Caco-2 (cell line): ENCODE measurements at regions of chr16 and their contacts with region 1.

Region 1: DNA sequence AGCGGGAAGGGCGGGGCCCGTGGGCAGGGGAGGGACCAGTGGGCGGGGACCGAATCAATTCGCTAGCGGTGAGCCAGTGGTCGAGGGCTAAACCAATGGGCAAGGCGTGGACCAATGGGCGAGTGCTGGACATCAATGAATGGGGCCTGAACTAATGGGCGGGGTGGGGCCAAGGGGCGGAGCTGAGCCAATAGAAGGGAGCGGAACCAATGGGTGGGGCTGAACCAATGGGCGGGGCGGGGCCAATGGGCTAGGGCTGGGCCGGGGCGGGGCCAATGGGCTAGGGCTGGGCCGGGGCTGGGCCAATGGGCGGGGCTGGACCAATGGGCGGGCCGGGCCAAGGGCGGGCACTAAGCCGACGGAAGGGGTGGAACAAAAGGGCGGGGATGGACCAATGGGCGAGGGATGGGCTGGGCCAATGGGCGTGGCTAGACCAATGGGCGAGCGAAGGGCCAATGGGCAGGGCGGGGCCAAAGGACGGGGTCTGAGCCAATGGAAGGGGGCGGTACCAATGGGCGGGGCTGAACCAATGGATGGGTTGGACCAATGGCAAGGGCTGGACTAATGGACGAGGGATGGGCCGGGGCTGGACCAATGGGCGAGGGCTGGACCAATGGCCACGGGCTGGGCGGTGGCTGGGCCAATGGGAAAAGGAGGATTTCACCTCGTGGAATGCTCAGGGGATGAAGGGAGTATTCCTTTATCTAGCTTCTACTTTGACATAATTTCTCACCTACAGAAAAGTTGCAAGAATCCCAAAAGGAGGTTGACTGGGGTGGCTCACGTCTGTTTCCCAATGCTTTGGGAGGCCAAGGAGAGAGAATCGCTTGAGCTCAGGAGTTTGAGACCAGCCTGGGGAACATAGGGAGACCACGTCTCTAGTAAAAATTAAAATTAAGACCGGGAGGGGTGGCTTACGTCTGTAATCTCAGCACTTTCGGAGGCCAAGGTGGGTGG is 6.0 kb upstream of the FLYWCH1 start:
- DNase-seq: peak; percentile 99 to 100
- H3K4me3 ChIP-seq: peak overlapping the region; percentile 88
- H3K4me3 Mint-ChIP-seq: peak overlapping the region; percentile 92
- H3K27ac Mint-ChIP-seq: peak overlapping the region; percentile 90
- H3K4me1 ChIP-seq: peaks cover 6% of the 10 kb centered on the region
- H3K4me1 Mint-ChIP-seq: peaks cover 5% of the 10 kb centered on the region
- H3K27me3 ChIP-seq: no peaks in the 10 kb centered on the region
- H3K27me3 Mint-ChIP-seq: no peaks in the 10 kb centered on the region
- CTCF ChIP-seq: no peak

Region 2: GRCh38 chr16:2715519-2715918 is 190.2 kb before region 1 on chr16:
- CTCF ChIA-PET with region 1: no interaction called
- POLR2A ChIA-PET with region 1: no interaction called
- intact Hi-C with region 1: no loop called
- DNase-seq: peak in 1 of 2 experiments; percentile 51
- H3K4me3 ChIP-seq: no peak overlapping the region
- H3K4me3 Mint-ChIP-seq: no peak overlapping the region
- H3K27ac Mint-ChIP-seq: no peak overlapping the region
- H3K4me1 ChIP-seq: peaks cover 20% of the 10 kb centered on the region
- H3K4me1 Mint-ChIP-seq: no peaks in the 10 kb centered on the region
- H3K27me3 ChIP-seq: no peaks in the 10 kb centered on the region
- H3K27me3 Mint-ChIP-seq: peaks cover 3% of the 10 kb centered on the region
- CTCF ChIP-seq: no peak

Region 3: DNA sequence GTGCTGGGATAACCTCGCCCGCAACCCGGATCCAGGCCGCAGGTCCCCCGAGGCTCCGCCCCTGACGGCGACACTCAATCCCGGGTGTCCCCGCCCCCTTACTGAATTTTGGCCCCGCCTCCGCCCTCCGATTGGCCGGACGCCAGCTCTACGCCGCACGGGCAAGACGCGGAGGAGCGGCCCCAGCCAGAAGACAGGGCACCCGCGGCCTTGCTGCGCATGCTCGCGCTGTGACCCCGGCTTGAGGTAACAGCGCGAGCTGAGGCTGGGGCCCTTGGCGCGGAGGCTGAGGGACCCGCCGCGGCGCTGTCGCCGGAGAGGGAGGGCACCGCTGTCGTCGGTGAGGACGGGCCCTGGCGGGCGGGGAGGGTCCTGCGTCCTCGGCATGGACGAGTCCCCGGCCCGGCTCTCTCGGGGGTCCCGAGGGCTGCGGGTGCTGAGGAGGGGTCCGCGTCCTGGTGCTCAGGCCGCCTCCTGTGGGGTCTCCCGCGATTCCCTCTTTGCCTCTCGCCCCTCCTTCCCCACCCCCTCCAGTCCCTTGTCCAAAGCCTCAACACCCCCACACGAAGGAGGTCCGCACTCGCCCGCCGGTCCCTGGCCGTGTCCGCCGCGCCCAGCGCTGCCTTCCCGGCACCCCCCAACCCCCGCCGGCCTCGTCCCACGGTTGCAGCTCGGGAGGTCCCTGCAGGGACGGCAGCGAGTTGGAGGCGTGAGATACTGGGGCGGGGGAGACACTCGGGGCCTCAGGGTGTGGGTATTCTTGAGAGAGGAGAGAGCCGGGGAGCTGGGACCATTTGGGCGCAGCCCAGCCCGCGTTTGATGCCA is 22.5 kb before region 1 on chr16 and contains the start of gene FLYWCH2:
- CTCF ChIA-PET with region 1: interaction called, 16 read pairs
- POLR2A ChIA-PET with region 1: interaction called, 18 read pairs
- intact Hi-C with region 1: loop called (anchors 1 kb)
- DNase-seq: peak; percentile 98 to 100
- H3K4me3 ChIP-seq: peak within 1 kb of the TSS; percentile 73
- H3K4me3 Mint-ChIP-seq: peak within 1 kb of the TSS; percentile 80
- H3K27ac Mint-ChIP-seq: peak within 1 kb of the TSS; percentile 65
- H3K4me1 ChIP-seq: no peaks in the 10 kb centered on the region
- H3K4me1 Mint-ChIP-seq: no peaks in the 10 kb centered on the region
- H3K27me3 ChIP-seq: no peaks in the 10 kb centered on the region
- H3K27me3 Mint-ChIP-seq: no peaks in the 10 kb centered on the region
- CTCF ChIP-seq: peak in 1 of 2 experiments; percentile 5
- total RNA-seq, gene FLYWCH2: 26.0 and 28.7 TPM in 2 replicates

Region 4: GRCh38 chr16:2926650-2927646 is 21.2 kb after region 1 on chr16:
- CTCF ChIA-PET with region 1: interaction called, 15 read pairs
- POLR2A ChIA-PET with region 1: no interaction called
- intact Hi-C with region 1: no loop called
- DNase-seq: peak; percentile 77 to 83
- H3K4me3 ChIP-seq: no peak overlapping the region
- H3K4me3 Mint-ChIP-seq: peak overlapping the region; percentile 44
- H3K27ac Mint-ChIP-seq: peak overlapping the region; percentile 23
- H3K4me1 ChIP-seq: peaks cover 13% of the 10 kb centered on the region
- H3K4me1 Mint-ChIP-seq: no peaks in the 10 kb centered on the region
- H3K27me3 ChIP-seq: no peaks in the 10 kb centered on the region
- H3K27me3 Mint-ChIP-seq: no peaks in the 10 kb centered on the region
- CTCF ChIP-seq: peak; percentile 85 to 90

Region 5: GRCh38 chr16:3214904-3215600 is 309.3 kb after region 1 on chr16:
- CTCF ChIA-PET with region 1: no interaction called
- POLR2A ChIA-PET with region 1: no interaction called
- intact Hi-C with region 1: no loop called
- DNase-seq: no peak
- H3K4me3 ChIP-seq: no peak overlapping the region
- H3K4me3 Mint-ChIP-seq: no peak overlapping the region
- H3K27ac Mint-ChIP-seq: no peak overlapping the region
- H3K4me1 ChIP-seq: no peaks in the 10 kb centered on the region
- H3K4me1 Mint-ChIP-seq: no peaks in the 10 kb centered on the region
- H3K27me3 ChIP-seq: no peaks in the 10 kb centered on the region
- H3K27me3 Mint-ChIP-seq: peaks cover 5% of the 10 kb centered on the region
- CTCF ChIP-seq: no peak